ENCODE measurements at regions of chr16 and their contacts with region 1.

Region 1: DNA sequence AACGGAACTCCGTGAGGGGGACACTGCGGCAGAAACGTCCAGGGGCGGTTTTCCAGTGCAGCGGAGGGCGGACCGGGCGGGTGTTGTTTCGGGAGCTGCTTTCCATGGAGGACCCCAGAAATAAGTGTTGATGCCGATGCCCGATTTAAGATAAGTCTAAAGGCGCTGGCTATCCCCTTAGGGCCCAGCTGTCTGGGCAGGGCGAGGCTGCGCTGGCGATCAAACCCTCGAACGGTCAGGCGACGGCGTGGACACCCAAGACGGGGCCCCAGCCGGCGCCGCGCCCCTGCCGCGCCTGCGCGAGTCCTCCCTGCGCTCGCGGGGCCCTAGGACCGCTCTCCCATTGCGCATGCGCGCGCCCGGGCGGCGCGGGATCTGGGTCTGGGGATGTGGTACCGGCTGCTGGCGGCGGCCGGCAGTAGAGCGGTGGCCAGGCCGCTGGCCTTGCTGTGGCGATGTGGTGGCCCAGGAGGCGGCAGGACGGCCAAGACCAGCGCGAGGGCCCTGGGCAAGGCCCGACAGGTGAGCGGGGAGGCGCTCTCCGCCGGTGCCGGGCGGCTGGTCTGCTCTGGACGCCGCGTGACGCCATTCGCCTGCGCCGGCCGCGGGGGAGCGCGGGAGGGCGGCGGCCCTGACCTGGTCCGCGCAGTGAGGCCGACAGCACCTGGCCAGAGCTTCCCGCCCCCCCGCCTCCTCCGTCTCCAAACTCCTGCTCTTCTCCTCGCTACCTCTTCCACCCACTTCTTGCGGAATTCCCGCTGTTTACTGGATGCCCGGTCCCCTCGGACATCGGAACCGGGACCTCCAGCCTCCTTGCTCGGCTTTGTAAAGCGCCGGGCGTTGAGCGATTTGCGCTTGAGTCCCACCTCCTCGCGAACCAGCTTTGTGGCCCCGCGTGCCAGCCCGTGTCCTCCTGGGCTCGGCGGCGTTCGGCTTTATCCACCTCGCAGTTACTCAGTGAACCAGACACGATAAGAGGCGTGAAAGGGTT is 24.0 kb downstream of the DEF8 start:
- DNase-seq: peak; percentile 100

Region 2: DNA sequence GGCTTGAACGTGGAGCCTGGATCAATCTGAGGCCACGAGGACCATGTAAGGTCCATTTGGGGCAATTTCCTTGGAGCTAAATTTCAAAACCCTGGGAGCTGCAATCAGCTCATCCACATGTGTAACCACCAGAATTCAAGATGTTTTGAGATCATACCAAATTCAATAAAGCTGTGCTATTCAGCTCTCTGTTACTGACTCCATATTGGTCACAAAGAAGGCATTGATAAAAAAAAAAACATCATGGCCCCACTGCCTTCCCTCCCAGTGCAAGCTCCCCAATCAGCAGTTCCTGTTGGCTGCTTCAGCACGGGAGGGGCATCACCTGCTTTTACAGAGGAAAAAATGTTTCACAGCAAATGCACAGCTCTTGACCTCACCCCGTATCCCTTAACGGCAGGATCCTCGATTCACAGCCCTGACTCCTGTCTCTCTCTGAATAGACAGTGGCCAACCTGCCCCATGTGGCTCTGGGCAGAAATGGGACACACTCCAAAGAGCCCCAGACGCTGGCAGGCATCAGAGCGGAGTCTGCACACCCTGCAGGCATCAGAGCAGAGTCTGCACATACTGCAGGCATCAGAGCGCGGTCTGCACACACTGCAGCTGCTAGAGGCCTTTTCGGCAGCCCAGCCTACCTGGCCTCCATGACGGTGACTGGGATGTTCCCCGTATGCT is 193.2 kb before region 1 on chr16:
- CTCF ChIA-PET with region 1: no interaction called
- POLR2A ChIA-PET with region 1: no interaction called
- DNase-seq: no peak

Region 3: GRCh38 chr16:89958068-89958467 is 14.5 kb before region 1 on chr16:
- CTCF ChIA-PET with region 1: no interaction called
- POLR2A ChIA-PET with region 1: interaction called, 10 read pairs
- DNase-seq: peak; percentile 54

Region 4: DNA sequence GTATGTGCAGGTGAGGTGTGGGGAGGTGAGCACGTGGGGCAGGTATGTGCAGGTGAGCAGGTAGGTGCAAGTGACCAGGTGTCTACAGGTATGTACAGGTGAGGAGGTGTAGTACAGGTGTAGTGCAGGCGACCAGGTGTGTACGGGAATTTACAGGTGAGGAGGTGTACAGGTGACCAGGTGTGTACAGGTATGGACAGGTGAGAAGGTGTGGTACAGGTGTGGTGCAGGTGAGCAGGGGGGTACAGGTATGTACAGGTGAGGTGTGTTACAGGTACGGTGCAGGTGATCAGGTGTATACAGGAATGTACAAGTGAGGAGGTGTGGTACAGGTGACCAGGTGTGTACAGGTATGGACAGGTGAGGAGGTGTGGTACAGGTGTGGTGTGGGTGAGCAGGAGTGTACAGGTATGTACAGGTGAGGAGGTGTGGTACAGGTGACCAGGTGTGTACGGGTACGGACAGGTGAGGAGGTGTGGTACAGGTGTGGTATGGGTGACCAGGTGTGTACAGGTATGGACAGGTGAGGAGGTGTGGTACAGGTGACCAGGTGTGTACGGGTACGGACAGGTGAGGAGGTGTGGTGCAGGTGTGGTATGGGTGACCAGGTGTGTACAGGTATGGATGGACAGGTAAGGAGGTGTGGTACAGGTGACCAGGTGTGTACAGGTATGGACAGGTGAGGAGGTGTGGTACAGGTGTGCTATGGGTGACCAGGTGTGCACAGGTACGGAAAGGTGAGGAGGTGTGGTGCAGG is 59.6 kb after region 1 on chr16:
- CTCF ChIA-PET with region 1: no interaction called
- POLR2A ChIA-PET with region 1: no interaction called
- DNase-seq: no peak